Naive thymus-derived CD8-positive, alpha-beta T cell (primary cell): ENCODE measurements at regions of chr10 and their contacts with region 1.

Region 1: DNA sequence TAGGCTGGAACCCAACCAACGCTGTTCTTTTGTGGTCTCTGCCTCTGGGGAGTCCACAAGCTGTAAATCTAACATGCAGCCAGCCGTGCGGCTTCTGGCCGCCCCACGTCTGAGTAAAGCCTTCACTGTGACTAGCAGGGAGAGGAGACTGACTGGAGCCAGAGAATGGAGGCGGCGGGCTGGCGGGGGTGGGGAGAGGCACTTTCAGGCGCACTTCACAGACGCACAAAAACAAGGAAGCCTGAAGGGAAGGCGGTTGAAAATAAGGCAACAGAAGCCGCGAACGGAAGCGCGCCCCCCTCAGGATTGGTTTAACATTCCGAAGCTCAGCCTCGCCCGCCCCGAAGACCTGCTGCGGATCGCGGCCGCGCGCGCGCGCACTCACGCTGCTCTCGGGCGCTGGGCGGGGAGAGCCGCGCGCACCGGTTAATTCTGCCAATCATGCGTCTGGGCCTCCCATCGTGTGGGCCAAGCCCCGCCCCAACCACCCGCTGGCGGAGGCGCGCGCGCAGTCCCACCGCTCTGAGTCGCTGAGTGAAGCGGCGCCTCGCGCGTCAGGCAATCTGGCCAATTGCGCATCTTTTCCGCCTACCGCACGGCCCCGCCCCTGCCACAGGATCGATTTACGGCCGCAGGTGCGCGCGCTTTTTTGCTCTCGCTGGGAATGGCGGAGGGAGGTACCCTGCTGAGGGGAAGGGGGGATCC is at the start of gene SFR1:
- DNase-seq: peak; percentile 94 to 100 (median 99)
- ATAC-seq: peak; percentile 82 to 84
- H3K4me3 Mint-ChIP-seq: peak within 1 kb of the TSS; percentile 91 to 99 (median 94)
- H3K27ac Mint-ChIP-seq: peak within 1 kb of the TSS; percentile 96 to 100 (median 99)
- H3K4me1 Mint-ChIP-seq: peaks cover 9 to 28% (median 23%) of the 10 kb centered on the region in 4 donors
- H3K27me3 Mint-ChIP-seq: no peaks in the 10 kb centered on the region
- polyA plus RNA-seq, gene SFR1: 12.9 to 18.2 (median 14.4) TPM

Region 2: DNA sequence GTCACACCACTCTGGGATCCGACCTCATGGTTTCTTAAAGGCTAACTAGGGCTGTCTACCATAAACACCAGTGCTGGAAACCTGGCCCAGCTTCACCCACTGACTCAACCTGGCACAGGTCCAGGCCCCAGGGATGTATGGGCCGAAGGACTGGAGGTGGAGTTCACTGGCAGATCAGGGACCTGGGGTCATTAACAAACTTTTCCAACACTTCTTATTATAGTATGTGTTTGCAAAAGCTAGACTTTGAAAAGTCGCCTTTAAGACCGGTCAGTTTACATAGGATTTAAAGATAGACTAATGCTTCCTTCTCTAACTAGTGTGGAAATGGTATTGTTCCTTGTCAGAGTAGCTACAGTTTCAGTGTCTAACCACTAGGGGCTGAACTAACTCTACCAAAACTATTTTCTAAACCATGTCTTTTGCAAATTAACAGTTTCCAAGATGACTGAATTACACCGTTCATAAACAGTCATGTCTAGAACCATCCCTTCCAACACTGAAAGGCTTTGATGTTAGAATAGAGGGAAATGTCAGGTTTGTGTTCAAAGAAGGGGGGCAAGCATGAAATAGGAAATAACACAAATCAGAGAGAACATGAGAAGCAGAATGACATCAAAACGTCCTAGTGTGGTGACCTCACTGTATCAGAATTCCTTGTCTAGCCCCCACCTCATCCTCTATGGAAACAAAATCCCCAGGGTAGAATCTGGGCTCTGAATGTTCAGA is 233.4 kb before region 1 on chr10:
- POLR2A ChIA-PET with region 1: interaction called, 19 read pairs
- DNase-seq: peak in 6 of 10 donors; percentile 6 to 71 (median 40)
- ATAC-seq: peak; percentile 83 to 88
- H3K4me3 Mint-ChIP-seq: peak overlapping the region in 1 of 10 donors; percentile 31
- H3K27ac Mint-ChIP-seq: peak overlapping the region in 8 of 10 donors; percentile 6 to 90 (median 36)
- H3K4me1 Mint-ChIP-seq: peaks cover 10 to 37% (median 24%) of the 10 kb centered on the region in 4 donors
- H3K27me3 Mint-ChIP-seq: no peaks in the 10 kb centered on the region

Region 3: DNA sequence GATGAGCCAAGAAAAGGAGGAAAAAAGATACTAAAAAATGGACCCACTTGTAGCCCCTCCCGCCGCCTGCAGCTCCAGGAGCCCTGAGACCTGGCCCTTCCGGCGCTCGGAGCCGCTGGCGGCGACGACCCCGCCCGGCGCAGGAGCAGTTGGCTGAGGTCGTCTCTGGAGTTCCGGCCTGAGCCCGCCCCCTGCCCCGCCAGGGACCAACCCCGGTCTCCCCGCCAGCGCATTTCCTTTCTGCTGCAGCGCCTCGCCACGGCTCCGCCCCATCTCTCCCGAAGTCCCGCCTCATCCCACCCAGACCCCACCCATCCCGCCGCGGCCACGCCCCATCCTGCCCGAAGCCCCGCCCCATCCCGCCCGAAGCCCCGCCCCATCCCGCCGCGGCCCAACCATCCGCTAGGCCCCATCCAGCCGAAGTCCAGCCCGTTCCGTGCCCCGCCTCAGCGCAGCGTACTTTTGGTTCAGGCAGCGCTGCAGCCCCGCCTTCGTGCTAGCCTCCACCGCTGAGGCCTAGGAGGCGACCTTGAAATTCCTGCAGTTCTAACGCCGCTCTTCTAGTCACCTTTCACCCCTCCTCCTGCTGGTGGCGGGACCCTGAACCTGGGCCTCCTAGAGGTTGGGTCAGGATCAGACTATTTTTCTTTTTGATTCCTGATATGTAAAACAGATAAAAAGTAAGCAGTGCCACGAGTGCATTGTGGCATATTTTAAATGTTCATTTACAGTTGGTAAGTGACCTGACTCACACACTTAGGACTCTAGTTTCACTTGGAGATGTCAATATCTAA is 203.4 kb before region 1 on chr10 and contains the start of gene STN1:
- POLR2A ChIA-PET with region 1: interaction called, 18 read pairs
- DNase-seq: peak; percentile 90 to 97 (median 94)
- ATAC-seq: peak; percentile 90 to 94
- H3K4me3 Mint-ChIP-seq: peak within 1 kb of the TSS; percentile 89 to 99 (median 97)
- H3K27ac Mint-ChIP-seq: peak within 1 kb of the TSS; percentile 93 to 99 (median 97)
- H3K4me1 Mint-ChIP-seq: peaks cover 12 to 54% (median 34%) of the 10 kb centered on the region in 4 donors
- H3K27me3 Mint-ChIP-seq: no peaks in the 10 kb centered on the region
- polyA plus RNA-seq, gene STN1: 89.3 to 103 (median 94.8) TPM

Region 4: GRCh38 chr10:103983367-103983911 is 138.2 kb before region 1 on chr10:
- POLR2A ChIA-PET with region 1: interaction called, 12 read pairs
- DNase-seq: peak in 3 of 10 donors; percentile 34 to 47 (median 44)
- ATAC-seq: peak; percentile 88
- H3K4me3 Mint-ChIP-seq: peak overlapping the region; percentile 51 to 83 (median 67)
- H3K27ac Mint-ChIP-seq: peak overlapping the region; percentile 31 to 93 (median 87)
- H3K4me1 Mint-ChIP-seq: peaks cover 32 to 81% (median 70%) of the 10 kb centered on the region in 4 donors
- H3K27me3 Mint-ChIP-seq: no peaks in the 10 kb centered on the region